Activated T-helper 1 cell treated with anti-CD3 and anti-CD28 coated beads, Interleukin-12 subunit alpha, Interleukin-12 subunit beta, Interleukin-2, Interleukin-4 antibody, amounts not matched to agents 30 ng/mL and 10 ng/mL and 1 ng/mL, durations not matched to agents 14 hours and 24 hours and 36 hours (primary cell): ENCODE measurements at regions of chr1 and their contacts with region 1.

Region 1: DNA sequence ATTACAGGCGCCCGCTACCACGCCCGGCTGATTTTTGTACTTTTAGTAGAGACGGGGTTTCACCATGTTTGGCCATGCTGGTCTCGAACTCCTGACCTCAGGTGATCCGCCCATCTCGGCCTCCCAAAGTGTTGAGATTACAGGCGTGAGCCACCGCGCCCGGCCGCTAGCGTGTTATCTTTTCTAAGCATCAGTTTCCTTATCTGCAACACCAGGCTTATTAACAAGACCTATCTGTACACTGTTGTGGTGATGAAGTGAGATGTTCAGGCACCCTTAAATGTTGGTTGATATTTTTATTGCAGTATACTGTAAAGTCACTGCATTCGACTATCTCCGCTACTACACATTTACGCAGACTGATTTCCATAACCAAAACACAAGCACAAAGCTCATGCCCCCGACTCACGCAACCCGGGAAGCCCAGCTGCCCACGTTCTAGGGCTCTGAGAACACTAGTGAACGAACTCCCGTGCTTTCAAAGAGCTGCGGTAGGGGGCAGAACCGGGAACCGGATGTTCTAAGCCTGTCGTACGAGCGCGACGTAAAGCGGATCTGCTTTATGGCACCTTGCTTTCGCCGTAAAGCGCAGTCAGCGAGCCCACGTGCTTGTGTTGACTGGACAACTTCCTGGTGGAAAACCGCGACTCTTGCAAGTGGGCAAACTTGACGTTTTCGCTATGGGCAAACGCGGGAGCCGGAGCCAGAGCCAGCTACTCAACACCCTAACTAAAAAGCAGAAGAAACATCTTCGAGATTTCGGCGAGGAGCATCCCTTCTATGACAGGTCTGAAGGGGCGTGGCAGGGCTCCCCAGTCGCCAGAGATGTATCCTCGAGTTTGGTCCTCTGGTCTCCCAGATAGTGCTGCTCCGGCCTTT is at the start of gene UTP25:
- DNase-seq: peak; percentile 89
- H3K4me3 Mint-ChIP-seq: peak within 1 kb of the TSS; percentile 93
- H3K27ac Mint-ChIP-seq: peak within 1 kb of the TSS; percentile 90
- H3K4me1 Mint-ChIP-seq: peaks cover 51% of the 10 kb centered on the region
- H3K27me3 Mint-ChIP-seq: peaks cover 9% of the 10 kb centered on the region
- total RNA-seq, gene UTP25: 17.7 and 18.3 TPM in 2 replicates

Region 2: GRCh38 chr1:209784265-209785169 is 43.1 kb before region 1 on chr1 and contains the start of gene C1orf74:
- intact Hi-C with region 1: loop called (anchors 1 kb)
- DNase-seq: peak; percentile 100
- H3K4me3 Mint-ChIP-seq: peak within 1 kb of the TSS; percentile 90
- H3K27ac Mint-ChIP-seq: peak within 1 kb of the TSS; percentile 96
- H3K4me1 Mint-ChIP-seq: peaks cover 71% of the 10 kb centered on the region
- H3K27me3 Mint-ChIP-seq: no peaks in the 10 kb centered on the region
- total RNA-seq, gene C1orf74: 2.9 and 3.2 TPM in 2 replicates

Region 3: DNA sequence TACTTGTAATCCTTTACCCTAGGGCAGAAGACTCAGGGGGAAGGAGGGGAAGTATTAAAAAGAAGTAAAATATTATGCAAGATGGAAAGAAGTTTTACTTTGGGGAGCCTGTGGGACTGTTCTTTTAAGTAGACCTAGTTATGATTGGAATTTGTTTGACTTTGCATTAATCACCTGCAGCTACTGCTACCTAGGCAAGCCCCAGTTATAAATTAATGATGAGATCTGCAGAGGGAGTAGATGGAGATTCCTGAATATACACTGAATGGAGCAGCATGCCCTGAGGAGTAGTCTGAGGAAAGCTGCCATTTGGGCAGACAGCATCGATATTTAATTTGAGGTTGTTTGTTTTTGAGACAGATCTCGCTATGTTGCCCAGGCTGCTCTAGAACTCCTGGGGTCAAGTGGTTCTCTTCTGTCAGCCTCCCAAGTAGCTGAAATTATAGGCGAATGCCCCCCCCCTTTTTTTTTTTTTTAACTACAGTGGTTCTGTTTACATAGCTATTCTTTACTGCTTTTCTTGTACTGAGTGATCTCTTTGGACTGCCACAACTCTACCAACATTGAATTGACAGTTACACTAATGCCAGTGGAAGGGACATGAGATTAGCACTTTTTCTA is 323.5 kb after region 1 on chr1:
- intact Hi-C with region 1: no loop called
- DNase-seq: no peak
- H3K4me3 Mint-ChIP-seq: no peak overlapping the region
- H3K27ac Mint-ChIP-seq: no peak overlapping the region
- H3K4me1 Mint-ChIP-seq: no peaks in the 10 kb centered on the region
- H3K27me3 Mint-ChIP-seq: no peaks in the 10 kb centered on the region